ENCODE measurements at regions of chr18 and their contacts with region 1.

Region 1: GRCh38 chr18:36493349-36494159 is 196.0 kb downstream of the FHOD3 start:
- DNase-seq: no peak
- ATAC-seq: no peak
- H3K4me3 ChIP-seq: no peak overlapping the region
- H3K27ac ChIP-seq: no peak overlapping the region
- H3K4me1 ChIP-seq: no peaks in the 10 kb centered on the region
- H3K27me3 ChIP-seq: no peaks in the 10 kb centered on the region
- CTCF ChIP-seq: no peak

Region 2: GRCh38 chr18:36212301-36213171 is 281.0 kb before region 1 on chr18:
- CTCF ChIA-PET with region 1: no interaction called
- POLR2A ChIA-PET with region 1: interaction called, 10 read pairs
- intact Hi-C with region 1: no loop called
- DNase-seq: no peak
- ATAC-seq: no peak
- H3K4me3 ChIP-seq: no peak overlapping the region
- H3K27ac ChIP-seq: no peak overlapping the region
- H3K4me1 ChIP-seq: no peaks in the 10 kb centered on the region
- H3K27me3 ChIP-seq: no peaks in the 10 kb centered on the region
- CTCF ChIP-seq: no peak